Panc1 (cell line): ENCODE measurements at regions of chr19 and their contacts with region 1.

Region 1: DNA sequence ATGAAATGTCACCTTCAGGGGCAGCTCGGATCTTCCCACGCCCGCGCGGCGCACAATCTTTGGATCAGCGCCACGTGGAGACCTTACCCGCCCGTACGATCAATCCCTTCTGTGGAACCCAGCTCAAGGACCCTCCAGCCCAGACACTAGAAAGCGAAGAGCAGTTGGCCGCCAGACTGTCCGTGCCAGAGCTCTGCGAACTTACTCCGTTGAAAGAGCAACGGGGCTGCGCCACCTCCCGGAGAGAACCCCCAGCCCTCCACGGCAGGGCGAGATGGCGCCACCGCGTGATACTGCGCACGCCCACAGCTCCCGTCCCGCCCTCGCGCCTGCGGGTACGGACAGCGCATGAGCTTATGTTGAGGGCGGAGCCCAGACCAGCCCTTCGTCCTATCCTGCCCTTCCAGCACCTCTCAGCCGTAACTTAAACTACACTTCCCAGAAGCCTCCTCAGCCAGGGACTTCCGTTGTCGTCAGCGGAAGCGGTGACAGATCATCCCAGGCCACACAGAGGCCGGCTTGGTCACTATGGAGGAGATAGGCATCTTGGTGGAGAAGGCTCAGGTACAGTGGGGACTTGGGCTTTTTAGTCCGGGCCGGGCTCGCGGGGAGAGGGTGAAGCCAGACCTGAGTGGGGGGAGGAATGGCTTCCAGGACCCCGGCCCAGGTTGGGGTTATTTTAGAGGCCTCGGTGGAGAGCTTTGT is at the start of gene PSMC4:
- DNase-seq: peak; percentile 100
- ATAC-seq: peak; percentile 98
- H3K4me3 ChIP-seq: peak within 1 kb of the TSS; percentile 35 to 50
- H3K27ac ChIP-seq: peak within 1 kb of the TSS; percentile 82
- H3K4me1 ChIP-seq: peaks cover 17% of the 10 kb centered on the region
- H3K27me3 ChIP-seq: no peaks in the 10 kb centered on the region
- CTCF ChIP-seq: no peak
- total RNA-seq, gene PSMC4: 2,386 TPM

Region 2: DNA sequence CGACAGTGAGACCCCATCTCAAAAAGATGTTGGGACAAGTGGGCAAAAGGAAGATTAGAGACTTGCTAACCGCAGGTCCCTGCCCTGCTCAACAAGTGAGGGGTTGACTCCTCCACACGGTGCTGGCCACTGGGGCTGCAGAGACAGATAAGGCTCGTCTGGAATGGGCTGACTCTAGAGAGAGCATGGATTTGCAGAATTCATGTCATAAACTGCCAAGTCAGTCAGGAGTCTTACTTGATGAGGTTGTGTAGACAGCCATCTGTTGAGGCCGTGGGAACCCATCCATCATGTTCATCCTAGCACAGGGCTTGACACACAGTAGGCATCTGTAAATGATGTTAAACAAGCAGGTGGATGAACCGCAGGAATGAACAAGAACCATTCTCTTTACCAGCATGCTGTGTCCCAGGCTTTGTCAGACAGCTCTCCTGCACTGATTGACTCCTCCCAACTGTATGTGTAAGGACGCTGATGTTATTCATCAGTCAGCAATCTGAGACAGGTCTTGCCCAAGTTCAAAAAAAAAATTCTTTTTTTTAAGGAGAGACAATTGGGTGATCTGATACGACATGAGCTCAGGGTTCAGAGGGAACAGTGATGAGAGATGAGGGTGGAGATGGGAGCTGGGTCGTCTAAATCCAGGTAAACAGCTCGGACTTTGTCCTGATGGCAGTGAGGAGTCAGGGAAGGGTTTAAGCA is 588.8 kb before region 1 on chr19:
- CTCF ChIA-PET with region 1: no interaction called
- POLR2A ChIA-PET with region 1: no interaction called
- in situ Hi-C with region 1: no loop called
- intact Hi-C with region 1: no loop called
- DNase-seq: no peak
- ATAC-seq: 0 out of 2 replicates have a peak, but pooled peaks have one; percentile 4
- H3K4me3 ChIP-seq: no peak overlapping the region
- H3K27ac ChIP-seq: no peak overlapping the region
- H3K4me1 ChIP-seq: peaks cover 21% of the 10 kb centered on the region
- H3K27me3 ChIP-seq: no peaks in the 10 kb centered on the region
- CTCF ChIP-seq: no peak

Region 3: DNA sequence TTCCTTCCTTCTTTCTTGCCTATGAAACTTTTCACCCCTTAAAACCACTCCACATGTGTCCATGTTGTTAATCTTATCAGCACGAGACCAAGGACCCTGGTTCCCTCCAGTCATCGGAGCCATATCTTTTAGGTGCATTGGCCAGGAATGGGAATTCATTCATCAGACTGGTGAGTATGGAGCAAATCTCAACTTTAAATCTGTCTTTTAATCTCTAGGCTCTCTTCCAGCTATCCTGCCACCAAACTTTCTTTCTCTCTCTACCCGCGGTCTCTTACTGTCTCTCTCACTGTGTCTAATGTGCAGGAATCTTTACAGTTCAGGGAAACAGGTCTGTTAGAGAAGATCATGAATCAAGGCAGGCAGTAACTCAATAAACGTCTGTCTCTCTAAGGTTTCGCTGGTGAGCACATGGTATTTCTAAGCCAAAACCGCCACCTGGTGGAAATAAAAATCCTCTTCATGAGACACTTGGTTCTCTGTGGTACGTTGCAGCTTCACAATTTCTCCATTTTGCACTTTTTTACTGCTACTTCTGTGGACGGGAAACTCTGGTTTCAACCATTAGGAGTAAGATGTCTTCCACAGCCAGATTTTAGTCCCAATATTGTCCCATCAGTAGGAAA is 299.0 kb before region 1 on chr19:
- CTCF ChIA-PET with region 1: interaction called, 27 read pairs
- POLR2A ChIA-PET with region 1: no interaction called
- in situ Hi-C with region 1: no loop called
- intact Hi-C with region 1: no loop called
- DNase-seq: peak; percentile 100
- ATAC-seq: peak; percentile 95
- H3K4me3 ChIP-seq: no peak overlapping the region
- H3K27ac ChIP-seq: no peak overlapping the region
- H3K4me1 ChIP-seq: peaks cover 11% of the 10 kb centered on the region
- H3K27me3 ChIP-seq: peaks cover 57% of the 10 kb centered on the region
- CTCF ChIP-seq: no peak

Region 4: DNA sequence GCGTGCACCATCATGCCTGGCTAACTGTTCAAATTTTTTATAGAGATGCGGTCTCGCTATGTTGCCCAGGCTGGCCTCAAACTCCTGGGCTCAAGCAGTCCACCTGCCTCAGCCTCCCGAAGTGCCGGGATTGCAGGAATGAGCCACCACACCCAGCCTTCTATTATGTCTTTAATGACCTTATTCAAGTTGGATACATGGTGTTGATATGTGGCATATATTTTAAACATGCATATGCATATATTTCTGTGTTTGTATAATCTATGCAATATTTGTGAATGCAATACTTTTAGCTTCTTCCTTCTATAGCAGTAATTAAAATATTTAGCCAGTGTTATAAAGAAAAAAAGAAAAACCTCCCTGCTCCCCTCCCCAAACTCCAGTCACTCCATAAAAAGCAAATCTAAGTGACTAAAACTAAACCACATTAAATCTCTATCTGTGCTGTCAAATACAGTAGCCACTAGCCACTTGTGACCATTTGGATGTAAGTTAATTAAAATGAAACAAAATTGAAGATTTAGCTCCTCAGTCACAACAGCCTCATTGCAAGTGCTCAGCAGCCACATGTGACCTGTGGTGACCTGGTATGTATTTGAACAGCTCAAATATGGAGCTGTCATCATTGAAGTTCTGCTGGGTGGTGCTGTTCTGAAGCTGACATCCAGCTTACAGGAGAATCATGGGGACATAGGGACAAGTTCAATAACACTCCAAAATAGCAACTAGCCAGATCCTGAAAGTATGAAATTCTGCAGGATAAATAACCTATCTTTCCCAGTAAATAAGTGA is 63.8 kb before region 1 on chr19:
- CTCF ChIA-PET with region 1: interaction called, 55 read pairs
- POLR2A ChIA-PET with region 1: interaction called, 6 read pairs
- in situ Hi-C with region 1: no loop called
- intact Hi-C with region 1: no loop called
- DNase-seq: no peak
- ATAC-seq: no peak
- H3K4me3 ChIP-seq: no peak overlapping the region
- H3K27ac ChIP-seq: no peak overlapping the region
- H3K4me1 ChIP-seq: no peaks in the 10 kb centered on the region
- H3K27me3 ChIP-seq: peaks cover 3% of the 10 kb centered on the region; the same call in 1 of the 2 replicates
- CTCF ChIP-seq: no peak

Region 5: GRCh38 chr19:39941615-39942365 is 29.0 kb before region 1 on chr19:
- CTCF ChIA-PET with region 1: interaction called, 20 read pairs
- POLR2A ChIA-PET with region 1: interaction called, 14 read pairs
- in situ Hi-C with region 1: loop called (anchors 5 kb)
- intact Hi-C with region 1: no loop called
- DNase-seq: no peak
- ATAC-seq: no peak
- H3K4me3 ChIP-seq: no peak overlapping the region
- H3K27ac ChIP-seq: no peak overlapping the region
- H3K4me1 ChIP-seq: peaks cover 8% of the 10 kb centered on the region
- H3K27me3 ChIP-seq: peaks cover 34% of the 10 kb centered on the region
- CTCF ChIP-seq: no peak

Region 6: GRCh38 chr19:40035996-40036395 is 65.2 kb after region 1 on chr19:
- CTCF ChIA-PET with region 1: interaction called, 5 read pairs
- POLR2A ChIA-PET with region 1: interaction called, 6 read pairs
- in situ Hi-C with region 1: loop called (anchors 5 kb)
- intact Hi-C with region 1: no loop called
- DNase-seq: no peak
- ATAC-seq: no peak
- H3K4me3 ChIP-seq: no peak overlapping the region
- H3K27ac ChIP-seq: no peak overlapping the region
- H3K4me1 ChIP-seq: no peaks in the 10 kb centered on the region
- H3K27me3 ChIP-seq: no peaks in the 10 kb centered on the region
- CTCF ChIP-seq: peak; percentile 19; the same call in 1 of the 2 replicates

Region 7: DNA sequence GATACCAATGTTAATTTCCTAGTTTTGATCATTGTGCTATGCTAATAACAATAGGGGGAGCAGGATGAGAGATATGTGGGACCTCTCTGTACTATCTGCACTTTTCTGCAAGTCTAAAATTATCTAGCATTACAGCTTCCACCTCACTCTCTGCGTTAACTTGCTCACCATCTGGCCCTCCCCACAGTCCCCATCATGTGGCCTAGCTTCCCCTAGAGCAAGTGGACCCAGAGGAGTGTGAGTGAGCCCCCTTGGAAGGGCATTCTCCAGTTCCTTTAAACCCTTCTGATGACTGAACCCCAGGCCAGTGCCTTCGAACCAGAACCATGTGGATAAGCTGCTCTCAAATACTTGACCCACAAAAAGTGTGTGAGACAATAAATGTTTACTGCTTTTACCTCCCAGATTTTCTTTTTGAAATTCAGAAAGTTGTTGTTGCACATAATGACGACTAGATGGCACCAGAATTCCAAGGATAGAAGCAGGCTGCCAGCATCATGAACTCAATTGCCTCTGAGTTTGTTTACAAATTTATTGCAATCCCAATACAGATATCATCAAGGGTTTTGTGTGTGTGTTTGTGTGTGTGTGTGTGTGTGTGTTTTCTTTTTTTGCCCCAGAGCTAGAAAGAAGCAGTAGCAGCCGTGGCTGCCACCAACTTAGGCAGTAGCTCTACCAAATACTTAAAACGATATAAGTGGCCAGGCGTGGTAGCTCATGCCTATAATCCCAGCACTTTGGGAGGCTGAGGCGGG is 168.9 kb after region 1 on chr19:
- CTCF ChIA-PET with region 1: interaction called, 15 read pairs
- POLR2A ChIA-PET with region 1: interaction called, 6 read pairs
- in situ Hi-C with region 1: no loop called
- intact Hi-C with region 1: no loop called
- DNase-seq: peak; percentile 100
- ATAC-seq: peak; percentile 76
- H3K4me3 ChIP-seq: no peak overlapping the region
- H3K27ac ChIP-seq: no peak overlapping the region
- H3K4me1 ChIP-seq: no peaks in the 10 kb centered on the region
- H3K27me3 ChIP-seq: peaks cover 43% of the 10 kb centered on the region
- CTCF ChIP-seq: no peak

Region 8: GRCh38 chr19:40348125-40348913 is 377.5 kb after region 1 on chr19 and contains the starts of genes C19orf47 and PLD3:
- CTCF ChIA-PET with region 1: no interaction called
- POLR2A ChIA-PET with region 1: no interaction called
- in situ Hi-C with region 1: no loop called
- intact Hi-C with region 1: no loop called
- DNase-seq: peak; percentile 78
- ATAC-seq: peak; percentile 99
- H3K4me3 ChIP-seq: peak within 1 kb of the TSS; percentile 80 to 98
- H3K27ac ChIP-seq: peak within 1 kb of the TSS; percentile 85
- H3K4me1 ChIP-seq: peaks cover 3% of the 10 kb centered on the region; the same call in 1 of the 2 replicates
- H3K27me3 ChIP-seq: no peaks in the 10 kb centered on the region
- CTCF ChIP-seq: no peak
- total RNA-seq, gene C19orf47: 29.0 TPM
- total RNA-seq, gene PLD3: 81.8 TPM